AG04450 (cell line): ENCODE measurements at regions of chr3 and their contacts with region 1.

Region 1: GRCh38 chr3:123559040-123559861 is 25.6 kb downstream of the HACD2 start:
- DNase-seq: no peak
- H3K4me3 ChIP-seq: no peak overlapping the region
- H3K27ac ChIP-seq: no peak overlapping the region
- H3K27me3 ChIP-seq: no peaks in the 10 kb centered on the region
- CTCF ChIP-seq: peak; percentile 82

Region 2: DNA sequence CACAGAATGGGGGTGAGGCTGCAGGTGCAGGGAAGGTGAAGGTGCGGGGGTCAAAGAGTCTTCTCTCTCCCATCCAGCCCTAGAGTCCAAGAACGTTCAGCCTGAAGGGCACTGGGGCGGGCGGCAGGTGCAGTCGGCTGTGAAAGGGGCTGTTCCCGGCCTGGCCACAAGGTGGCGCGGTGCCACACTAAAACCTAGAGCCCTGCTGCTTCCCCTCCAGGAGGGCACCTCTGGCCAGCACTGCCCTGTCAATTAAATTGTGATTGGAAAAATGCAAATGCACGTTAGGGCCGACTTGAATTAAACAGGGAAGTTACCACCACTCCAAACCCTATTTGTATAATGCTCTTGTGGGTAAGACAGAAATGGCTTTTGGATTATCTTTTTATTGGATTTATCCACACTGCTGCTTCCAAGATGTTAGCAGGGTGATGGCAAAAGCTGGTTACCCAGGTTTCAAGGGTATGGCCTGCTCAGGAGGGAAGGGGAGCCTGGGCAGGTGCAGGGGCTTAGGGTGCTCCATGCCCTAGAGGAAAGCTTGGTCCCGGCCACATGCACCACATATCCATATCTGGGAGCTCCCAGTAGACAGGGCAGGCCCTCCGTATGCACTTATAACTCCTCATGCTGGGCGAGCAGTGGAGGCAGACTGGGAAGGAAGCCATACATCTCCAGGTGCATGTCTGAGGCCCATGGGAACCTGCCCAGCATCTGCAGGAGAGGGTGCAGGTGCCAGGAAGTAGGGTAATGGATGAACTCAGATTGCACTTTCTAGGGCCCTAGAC is 230.2 kb before region 1 on chr3:
- CTCF ChIA-PET with region 1: interaction called, 65 read pairs
- POLR2A ChIA-PET with region 1: no interaction called
- DNase-seq: no peak
- H3K4me3 ChIP-seq: no peak overlapping the region
- H3K27ac ChIP-seq: no peak overlapping the region
- H3K27me3 ChIP-seq: peaks cover 37% of the 10 kb centered on the region
- CTCF ChIP-seq: peak; percentile 87

Region 3: DNA sequence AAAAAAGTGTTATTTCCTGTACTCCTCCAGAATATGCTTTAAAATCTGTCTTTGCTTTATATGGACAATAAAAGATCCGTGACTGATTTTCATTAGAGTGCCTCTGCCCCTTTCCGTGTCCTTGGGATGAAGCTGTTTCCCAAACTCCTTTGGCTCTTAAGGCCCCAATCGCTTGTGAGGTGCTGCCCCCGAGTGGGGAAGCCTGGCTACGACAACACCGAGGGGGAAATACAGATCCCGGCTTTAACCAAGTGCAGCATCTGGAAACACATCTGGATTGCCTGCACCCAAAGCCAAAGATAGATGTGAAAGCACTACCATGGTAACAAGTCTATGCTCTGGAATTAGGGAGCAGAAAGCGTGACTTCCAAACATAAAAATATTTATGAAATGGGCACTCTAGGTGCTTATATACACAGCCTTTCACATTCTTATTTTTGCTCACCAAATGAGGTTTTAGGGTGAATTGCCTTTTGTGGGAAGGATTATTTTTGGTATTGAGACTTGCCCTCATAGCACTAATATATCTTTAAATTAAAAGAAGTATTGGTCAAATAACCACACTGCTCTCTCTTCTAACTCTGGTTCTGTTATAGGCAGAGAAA is 69.7 kb before region 1 on chr3:
- CTCF ChIA-PET with region 1: interaction called, 28 read pairs
- POLR2A ChIA-PET with region 1: no interaction called
- DNase-seq: peak; percentile 26
- H3K4me3 ChIP-seq: no peak overlapping the region
- H3K27ac ChIP-seq: no peak overlapping the region
- H3K27me3 ChIP-seq: peaks cover 5% of the 10 kb centered on the region
- CTCF ChIP-seq: peak; percentile 94

Region 4: DNA sequence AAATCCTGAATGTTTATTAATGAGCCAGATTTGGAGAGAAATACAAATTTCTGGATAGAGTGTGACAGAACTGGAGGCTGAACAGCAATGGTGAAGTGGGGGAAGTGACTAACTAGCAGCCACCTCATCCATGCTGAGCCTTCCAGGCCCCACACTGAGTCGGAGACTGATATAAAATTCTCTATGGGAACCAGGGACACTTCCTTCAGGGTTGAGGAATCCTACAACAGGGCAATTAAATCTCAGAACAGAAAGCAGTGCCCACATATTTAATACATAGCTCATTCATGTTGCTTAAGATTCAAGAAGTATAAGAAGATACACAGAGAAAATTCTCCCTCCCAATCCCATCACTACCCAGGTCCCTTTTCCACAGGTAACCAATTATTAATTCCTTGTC is 23.7 kb before region 1 on chr3:
- CTCF ChIA-PET with region 1: interaction called, 20 read pairs
- POLR2A ChIA-PET with region 1: no interaction called
- DNase-seq: no peak
- H3K4me3 ChIP-seq: no peak overlapping the region
- H3K27ac ChIP-seq: no peak overlapping the region
- H3K27me3 ChIP-seq: no peaks in the 10 kb centered on the region
- CTCF ChIP-seq: no peak

Region 5: DNA sequence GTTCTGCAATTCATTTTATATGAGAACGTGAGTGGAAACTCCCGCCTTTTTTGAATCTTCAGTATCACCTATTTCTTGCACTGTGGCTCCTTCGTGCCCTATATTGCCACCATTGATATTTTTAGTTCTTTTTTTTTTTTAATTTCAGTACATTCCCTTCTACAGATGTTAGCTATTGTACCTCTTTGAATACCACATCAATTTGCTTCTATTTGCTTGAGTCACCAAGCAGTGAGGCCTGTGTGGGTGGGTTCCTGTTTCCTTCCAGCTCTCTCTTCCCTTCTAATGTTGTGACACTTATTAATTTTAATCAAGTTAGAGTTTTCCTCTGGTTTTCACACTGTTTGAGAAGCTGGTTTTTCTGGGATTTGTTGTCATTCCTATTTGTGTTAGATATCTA is 16.9 kb after region 1 on chr3:
- CTCF ChIA-PET with region 1: interaction called, 32 read pairs
- POLR2A ChIA-PET with region 1: no interaction called
- DNase-seq: no peak
- H3K4me3 ChIP-seq: no peak overlapping the region
- H3K27ac ChIP-seq: no peak overlapping the region
- H3K27me3 ChIP-seq: no peaks in the 10 kb centered on the region
- CTCF ChIP-seq: no peak

Region 6: GRCh38 chr3:123652346-123652984 is 93.2 kb after region 1 on chr3:
- CTCF ChIA-PET with region 1: no interaction called
- POLR2A ChIA-PET with region 1: no interaction called
- DNase-seq: no peak
- H3K4me3 ChIP-seq: no peak overlapping the region
- H3K27ac ChIP-seq: peak overlapping the region; percentile 94
- H3K27me3 ChIP-seq: no peaks in the 10 kb centered on the region
- CTCF ChIP-seq: peak; percentile 88